Gastrocnemius medialis (tissue), 4 donors: ENCODE measurements at regions of chrX and their contacts with region 1.

Region 1: DNA sequence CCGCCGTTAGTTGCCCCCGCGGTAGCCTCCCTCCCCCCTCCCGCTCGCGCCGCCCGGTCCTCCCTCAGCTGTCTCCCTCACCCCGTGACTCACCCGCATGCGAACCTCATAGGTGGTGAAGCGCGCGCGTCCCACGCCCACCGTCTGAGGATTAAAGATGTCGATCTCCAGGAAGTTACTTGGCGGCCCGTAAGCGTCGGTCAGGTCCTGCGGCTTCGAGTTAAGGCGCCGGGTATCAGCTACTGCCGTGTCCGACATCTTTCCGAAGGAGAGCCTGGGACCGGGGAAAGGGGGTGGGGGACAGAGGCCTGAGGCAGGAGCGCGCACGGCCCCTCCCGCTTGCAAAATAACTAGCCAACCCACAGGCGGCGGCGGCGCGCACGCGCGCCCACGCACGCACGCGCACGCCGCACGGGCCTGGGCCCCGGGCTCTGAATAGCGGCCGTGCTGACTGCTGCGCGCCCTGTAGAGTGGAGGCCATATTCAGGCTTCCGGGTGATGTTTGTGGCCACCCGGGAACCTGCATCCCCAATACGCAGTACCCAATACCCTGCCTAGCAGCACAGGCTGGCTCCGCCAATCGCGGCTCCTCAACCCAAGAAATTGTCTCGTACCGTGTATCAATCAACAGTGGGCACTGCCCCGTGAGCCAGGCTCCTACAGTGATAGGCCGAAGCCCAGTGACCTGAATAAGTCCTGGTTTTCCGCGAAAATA is at the start of gene SNX12:
- DNase-seq: peak; percentile 85 to 91
- ATAC-seq: peak; percentile 96 to 97
- H3K4me3 ChIP-seq: peak within 1 kb of the TSS; percentile 66 to 74 (median 72)
- H3K27ac ChIP-seq: peak within 1 kb of the TSS; percentile 86 to 93 (median 89)
- H3K4me1 ChIP-seq: peaks cover 3 to 8% of the 10 kb centered on the region in 2 donors
- H3K27me3 ChIP-seq: no peaks in the 10 kb centered on the region
- CTCF ChIP-seq: peak in 3 of 5 experiments; percentile 72 to 96 (median 86)
- POLR2A ChIP-seq: peak; percentile 72 to 78
- total RNA-seq, gene SNX12: 31.7 to 66.9 (median 43.4) TPM

Region 2: GRCh38 chrX:70635227-70635626 is 433.0 kb before region 1 on chrX:
- in situ Hi-C with region 1: no loop called
- intact Hi-C with region 1: no loop called
- DNase-seq: no peak
- ATAC-seq: no peak
- H3K4me3 ChIP-seq: no peak overlapping the region
- H3K27ac ChIP-seq: no peak overlapping the region
- H3K4me1 ChIP-seq: no peaks in the 10 kb centered on the region
- H3K27me3 ChIP-seq: no peaks in the 10 kb centered on the region
- CTCF ChIP-seq: no peak
- POLR2A ChIP-seq: no peak

Region 3: GRCh38 chrX:71095543-71095911 is 27.3 kb after region 1 on chrX and contains the start of gene FOXO4:
- in situ Hi-C with region 1: no loop called
- intact Hi-C with region 1: loop called (anchors 1 kb)
- DNase-seq: peak; percentile 85 to 86
- ATAC-seq: peak; percentile 95 to 96
- H3K4me3 ChIP-seq: peak within 1 kb of the TSS; percentile 62 to 71 (median 66)
- H3K27ac ChIP-seq: peak within 1 kb of the TSS; percentile 74 to 87 (median 84)
- H3K4me1 ChIP-seq: peaks cover 9% of the 10 kb centered on the region in 2 donors
- H3K27me3 ChIP-seq: no peaks in the 10 kb centered on the region
- CTCF ChIP-seq: no peak
- POLR2A ChIP-seq: peak; percentile 11 to 38
- total RNA-seq, gene FOXO4: 35.2 to 48.0 (median 41.8) TPM

Region 4: GRCh38 chrX:71118032-71118984 is 50.1 kb after region 1 on chrX and contains the start of gene MED12:
- in situ Hi-C with region 1: no loop called
- intact Hi-C with region 1: loop called (anchors 2 kb)
- DNase-seq: peak; percentile 66 to 77
- ATAC-seq: peak; percentile 96 to 97
- H3K4me3 ChIP-seq: peak within 1 kb of the TSS; percentile 70 to 80 (median 75)
- H3K27ac ChIP-seq: peak within 1 kb of the TSS; percentile 87 to 92 (median 90)
- H3K4me1 ChIP-seq: no peaks in the 10 kb centered on the region
- H3K27me3 ChIP-seq: no peaks in the 10 kb centered on the region
- CTCF ChIP-seq: no peak
- POLR2A ChIP-seq: peak; percentile 17 to 29
- total RNA-seq, gene MED12: 11.8 to 25.5 (median 17.4) TPM

Region 5: GRCh38 chrX:71254092-71254941 is 186.1 kb after region 1 on chrX and contains the start of gene ZMYM3:
- in situ Hi-C with region 1: no loop called
- intact Hi-C with region 1: loop called (anchors 5 kb)
- DNase-seq: peak; percentile 73 to 85
- ATAC-seq: peak; percentile 83 to 90
- H3K4me3 ChIP-seq: peak within 1 kb of the TSS; percentile 69 to 85 (median 82)
- H3K27ac ChIP-seq: peak within 1 kb of the TSS; percentile 88 to 94 (median 94)
- H3K4me1 ChIP-seq: peaks cover 0 to 8% of the 10 kb centered on the region in 2 donors
- H3K27me3 ChIP-seq: no peaks in the 10 kb centered on the region
- CTCF ChIP-seq: peak in 1 of 5 experiments; percentile 22
- POLR2A ChIP-seq: peak; percentile 48 to 53
- total RNA-seq, gene ZMYM3: 7.1 to 10.2 (median 8.9) TPM